Heart right ventricle (tissue), 16 donors: ENCODE measurements at regions of chr3 and their contacts with region 1.

Region 1: DNA sequence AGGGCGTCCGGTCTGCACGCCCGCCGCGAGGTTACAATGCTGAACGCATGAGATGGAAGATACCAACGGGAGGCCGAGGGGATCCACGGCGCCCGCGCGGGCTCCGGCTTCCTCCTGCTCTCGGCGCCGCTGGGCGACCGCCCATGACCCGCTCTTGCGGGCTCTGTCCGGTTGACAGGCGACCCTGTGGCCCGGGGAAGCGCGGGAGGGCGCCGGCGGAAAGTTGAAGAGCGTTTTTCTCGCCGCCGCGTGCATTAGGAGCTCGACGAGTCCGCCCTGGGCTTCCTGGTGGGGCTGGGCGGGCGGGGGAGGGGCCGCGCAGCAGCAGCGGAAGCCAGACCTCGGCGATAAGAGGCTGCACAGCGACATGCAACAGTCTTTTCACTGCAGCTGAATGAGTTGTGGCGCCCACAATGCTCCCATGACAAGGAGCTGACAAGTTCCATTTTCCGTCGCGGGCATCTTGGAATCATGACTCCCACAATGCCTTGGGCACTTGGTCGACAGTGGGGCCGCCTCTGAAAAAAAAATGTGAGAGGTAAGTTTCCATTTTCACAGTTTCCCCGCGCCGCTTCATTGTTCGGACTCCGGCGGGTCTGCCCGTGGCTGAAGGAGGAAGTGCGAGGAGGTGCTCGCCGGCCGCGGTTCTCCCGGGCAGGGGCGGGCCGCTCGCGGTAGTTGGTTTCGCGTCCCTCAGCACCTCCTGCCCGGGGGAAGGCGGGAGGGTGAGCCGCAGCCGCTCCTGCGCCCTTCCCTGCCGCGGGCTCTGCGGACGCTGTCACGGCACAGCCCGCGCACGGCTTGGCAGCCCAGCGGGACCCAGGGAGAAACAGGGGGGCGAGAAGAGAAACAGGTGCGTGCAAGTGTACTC is at the start of gene MBNL1:
- DNase-seq: peak; percentile 82 to 85
- ATAC-seq: peak; percentile 72 to 89 (median 80)
- H3K4me3 ChIP-seq: peak within 1 kb of the TSS; percentile 66 to 97 (median 81)
- H3K27ac ChIP-seq: peak within 1 kb of the TSS; percentile 95 to 100 (median 98)
- H3K4me1 ChIP-seq: peaks cover 9 to 74% (median 57%) of the 10 kb centered on the region in 9 donors
- H3K27me3 ChIP-seq: no peaks in the 10 kb centered on the region
- CTCF ChIP-seq: peak in 1 of 9 donors; percentile 13
- total RNA-seq, gene MBNL1: 173 to 236 (median 190) TPM

Region 2: GRCh38 chr3:152202976-152203626 is 65.7 kb before region 1 on chr3:
- intact Hi-C with region 1: loop called in 4 of 10 experiments (anchors 5 to 10 kb)
- DNase-seq: no peak
- ATAC-seq: peak in 1 of 8 donors; percentile 41
- H3K4me3 ChIP-seq: peak overlapping the region in 8 of 10 donors; percentile 0 to 49 (median 19)
- H3K27ac ChIP-seq: peak overlapping the region in 8 of 10 donors; percentile 8 to 91 (median 56)
- H3K4me1 ChIP-seq: peaks cover 0 to 73% (median 29%) of the 10 kb centered on the region in 9 donors
- H3K27me3 ChIP-seq: no peaks in the 10 kb centered on the region
- CTCF ChIP-seq: no peak

Region 3: GRCh38 chr3:152291649-152292066 is 22.9 kb after region 1 on chr3:
- intact Hi-C with region 1: no loop called
- DNase-seq: no peak
- ATAC-seq: peak in 6 of 8 donors; percentile 24 to 71 (median 40)
- H3K4me3 ChIP-seq: no peak overlapping the region
- H3K27ac ChIP-seq: peak overlapping the region in 9 of 10 donors; percentile 4 to 71 (median 59)
- H3K4me1 ChIP-seq: peaks cover 2 to 100% (median 87%) of the 10 kb centered on the region in 9 donors
- H3K27me3 ChIP-seq: no peaks in the 10 kb centered on the region
- CTCF ChIP-seq: no peak

Region 4: DNA sequence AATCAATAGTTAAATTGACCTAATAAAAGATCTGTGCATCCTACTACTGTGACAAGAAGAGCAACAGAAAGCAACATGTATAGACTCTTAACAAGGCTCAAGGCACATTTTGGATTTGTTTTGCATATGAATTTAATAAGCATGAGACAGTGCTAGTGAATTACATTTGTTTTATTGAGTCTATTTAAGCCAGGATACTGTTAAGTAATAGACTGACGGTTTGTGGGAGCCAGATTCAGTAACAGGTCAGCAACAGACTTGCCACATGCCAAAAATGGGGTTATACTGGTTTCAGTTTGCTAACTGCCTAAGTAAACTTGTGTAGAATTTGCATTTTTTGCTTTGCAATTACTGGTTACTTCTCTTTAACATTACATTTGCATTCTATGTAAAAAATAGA is 54.0 kb after region 1 on chr3:
- intact Hi-C with region 1: loop called in 3 of 10 experiments (anchors 5 kb)
- DNase-seq: no peak
- ATAC-seq: peak in 4 of 8 donors; percentile 28 to 53 (median 42)
- H3K4me3 ChIP-seq: no peak overlapping the region
- H3K27ac ChIP-seq: peak overlapping the region in 8 of 10 donors; percentile 6 to 67 (median 54)
- H3K4me1 ChIP-seq: peaks cover 3 to 91% (median 74%) of the 10 kb centered on the region in 9 donors
- H3K27me3 ChIP-seq: no peaks in the 10 kb centered on the region
- CTCF ChIP-seq: no peak

Region 5: DNA sequence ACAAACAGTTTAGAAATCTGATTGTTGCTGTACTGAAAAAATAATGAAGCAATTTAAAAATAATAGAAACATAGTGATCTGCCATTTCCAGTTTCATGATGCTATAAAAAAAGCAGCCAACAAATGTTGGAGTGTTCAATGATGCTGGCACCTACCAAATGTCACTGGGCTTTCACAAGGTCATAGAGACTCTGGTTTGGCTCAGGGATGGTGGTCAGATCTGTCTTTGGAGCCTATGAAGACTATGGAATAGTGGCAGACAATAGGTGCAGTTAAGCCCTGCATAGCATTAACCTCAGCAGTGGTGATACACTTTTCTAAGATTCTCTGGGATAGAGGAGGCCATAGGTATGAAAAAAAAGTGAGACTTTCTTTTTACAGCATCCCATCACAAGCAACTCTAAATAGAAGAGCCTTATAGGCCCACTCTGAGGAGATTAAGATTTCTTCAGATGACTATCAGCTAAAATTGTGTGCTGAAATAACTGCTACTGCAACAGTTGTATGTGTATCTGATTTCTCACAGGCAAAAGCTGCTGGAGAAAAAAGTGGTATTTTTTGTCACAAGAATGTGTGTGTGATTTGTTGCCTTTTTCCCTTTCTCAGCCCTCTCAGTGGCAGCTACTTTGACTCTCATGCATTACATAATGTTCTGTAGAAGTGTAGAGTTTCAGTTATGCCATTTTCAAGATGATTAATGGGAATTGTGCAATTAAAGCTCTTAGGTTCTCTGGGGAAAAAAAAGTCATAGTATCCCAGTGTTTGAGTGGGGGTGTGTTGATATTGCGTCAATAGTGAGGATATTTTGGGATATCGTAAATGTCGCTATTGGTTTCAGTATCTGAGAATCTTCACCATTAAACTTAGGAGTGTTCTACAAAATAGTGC is 137.4 kb after region 1 on chr3:
- intact Hi-C with region 1: loop called in 3 of 10 experiments (anchors 10 kb)
- DNase-seq: no peak
- ATAC-seq: peak; percentile 24 to 74 (median 56)
- H3K4me3 ChIP-seq: peak overlapping the region in 3 of 10 donors; percentile 15 to 17 (median 15)
- H3K27ac ChIP-seq: peak overlapping the region; percentile 36 to 85 (median 77)
- H3K4me1 ChIP-seq: peaks cover 0 to 82% (median 69%) of the 10 kb centered on the region in 9 donors
- H3K27me3 ChIP-seq: no peaks in the 10 kb centered on the region
- CTCF ChIP-seq: no peak

Region 6: GRCh38 chr3:152444029-152444641 is 175.3 kb after region 1 on chr3:
- intact Hi-C with region 1: loop called in 6 of 10 experiments (anchors 2 to 10 kb)
- DNase-seq: no peak
- ATAC-seq: peak in 7 of 8 donors; percentile 53 to 84 (median 70)
- H3K4me3 ChIP-seq: no peak overlapping the region
- H3K27ac ChIP-seq: peak overlapping the region in 4 of 10 donors; percentile 2 to 34 (median 22)
- H3K4me1 ChIP-seq: peaks cover 0 to 77% (median 44%) of the 10 kb centered on the region in 9 donors
- H3K27me3 ChIP-seq: no peaks in the 10 kb centered on the region
- CTCF ChIP-seq: peak; percentile 48 to 85 (median 66)